Activated CD4-positive, alpha-beta memory T cell treated with anti-CD3 and anti-CD28 coated beads, Interleukin-2, amount 10 ng/mL, durations not matched to agents 7 days and 5 days (primary cell): ENCODE measurements at regions of chr14 and their contacts with region 1.

Region 1: DNA sequence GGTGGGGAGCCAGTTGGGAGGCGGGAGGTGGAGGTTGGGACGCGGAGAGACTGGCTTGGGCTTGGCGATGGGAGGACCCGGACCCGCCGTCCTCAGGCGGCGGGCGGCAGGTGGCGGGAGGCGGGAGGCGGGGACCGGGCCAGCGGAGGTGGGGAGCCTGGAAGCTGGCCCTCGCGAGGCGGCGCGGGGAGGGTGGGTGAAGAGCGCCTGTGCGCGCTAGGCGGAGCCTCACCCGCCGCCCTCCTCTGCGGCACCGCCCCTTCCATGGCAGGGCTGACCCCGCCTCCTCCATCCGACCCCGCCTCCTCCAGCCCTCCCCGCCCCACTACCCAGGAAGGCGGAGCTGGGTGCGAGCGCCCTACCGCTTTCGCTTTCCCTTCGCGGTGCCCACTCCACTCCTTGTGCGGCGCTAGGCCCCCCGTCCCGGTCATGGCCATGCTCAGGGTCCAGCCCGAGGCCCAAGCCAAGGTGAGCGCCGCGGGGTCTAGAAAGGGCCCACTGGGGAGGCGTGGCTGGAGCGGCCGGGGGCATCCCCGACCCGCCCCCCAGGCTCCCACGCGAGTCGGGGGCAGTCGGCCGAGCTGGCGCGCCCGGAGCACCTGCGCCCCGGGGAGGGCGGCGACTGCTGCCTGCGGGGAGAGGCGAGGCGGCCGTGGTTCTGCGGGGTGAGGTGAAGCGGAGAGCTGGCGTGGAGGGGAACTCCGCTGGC is at the start of gene PSME1:
- DNase-seq: peak; percentile 96
- H3K4me3 Mint-ChIP-seq: peak within 1 kb of the TSS; percentile 93
- H3K27ac Mint-ChIP-seq: peak within 1 kb of the TSS; percentile 89
- H3K4me1 Mint-ChIP-seq: peaks cover 53% of the 10 kb centered on the region
- H3K27me3 Mint-ChIP-seq: no peaks in the 10 kb centered on the region
- total RNA-seq, gene PSME1: 391 to 397 TPM

Region 2: DNA sequence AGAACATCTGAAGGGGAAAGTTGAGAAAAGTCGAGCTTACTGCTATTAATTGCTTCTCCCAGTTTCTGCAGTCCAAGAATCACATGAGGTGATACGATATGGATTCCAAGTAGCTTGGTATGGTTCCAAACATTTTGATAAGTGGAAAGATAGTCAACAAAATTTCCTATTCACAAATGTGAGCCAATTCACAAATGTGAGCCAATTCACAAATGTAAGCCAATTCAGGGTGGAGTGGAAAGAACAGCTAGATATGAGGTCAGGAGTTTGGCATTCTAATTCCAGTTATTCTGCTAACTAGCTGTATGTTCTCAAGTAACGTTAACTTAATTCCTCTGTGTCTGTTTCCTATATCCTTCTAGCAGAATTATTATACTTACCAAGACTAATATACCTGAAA is 220.0 kb before region 1 on chr14:
- CTCF ChIA-PET with region 1: no interaction called
- POLR2A ChIA-PET with region 1: no interaction called
- DNase-seq: no peak
- H3K4me3 Mint-ChIP-seq: no peak overlapping the region
- H3K27ac Mint-ChIP-seq: no peak overlapping the region
- H3K4me1 Mint-ChIP-seq: no peaks in the 10 kb centered on the region
- H3K27me3 Mint-ChIP-seq: peaks cover 12% of the 10 kb centered on the region

Region 3: DNA sequence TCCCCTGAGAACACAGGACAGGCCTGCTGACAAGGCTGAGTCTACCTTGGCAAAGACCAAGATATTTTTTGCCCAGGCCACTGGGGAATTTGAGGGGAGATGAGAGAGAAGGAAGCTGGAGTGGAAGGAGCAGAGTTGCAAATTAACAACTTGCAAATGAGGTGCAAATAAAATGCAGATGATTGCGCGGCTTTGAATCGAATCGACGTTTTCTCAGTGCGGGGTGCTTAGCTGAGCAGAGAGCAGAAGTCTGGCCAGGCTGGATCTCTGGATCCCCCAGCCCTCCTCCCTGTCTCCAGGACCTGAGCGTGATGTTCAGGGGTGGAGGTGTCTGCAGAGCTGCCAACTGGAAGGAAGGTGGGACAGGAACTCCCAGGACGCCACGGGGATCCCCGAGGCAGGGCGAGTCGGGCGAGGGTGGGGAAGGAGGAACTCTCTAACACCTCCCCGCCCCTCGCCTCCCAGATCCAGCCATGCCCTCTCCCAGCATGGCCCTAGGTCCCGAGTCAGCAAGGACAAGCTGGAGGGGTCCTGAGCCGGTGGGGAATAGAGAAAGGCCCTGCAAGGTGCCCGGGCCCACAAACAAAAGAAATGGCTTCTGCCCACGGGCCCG is 84.7 kb before region 1 on chr14:
- CTCF ChIA-PET with region 1: no interaction called
- POLR2A ChIA-PET with region 1: no interaction called
- DNase-seq: peak; percentile 22
- H3K4me3 Mint-ChIP-seq: peak overlapping the region; percentile 69
- H3K27ac Mint-ChIP-seq: no peak overlapping the region
- H3K4me1 Mint-ChIP-seq: peaks cover 23% of the 10 kb centered on the region
- H3K27me3 Mint-ChIP-seq: peaks cover 30% of the 10 kb centered on the region

Region 4: GRCh38 chr14:24188251-24189058 is 52.5 kb after region 1 on chr14 and contains the start of gene IPO4:
- CTCF ChIA-PET with region 1: interaction called, 3 read pairs
- POLR2A ChIA-PET with region 1: interaction called, 13 read pairs
- DNase-seq: peak; percentile 96
- H3K4me3 Mint-ChIP-seq: peak within 1 kb of the TSS; percentile 81
- H3K27ac Mint-ChIP-seq: peak within 1 kb of the TSS; percentile 79
- H3K4me1 Mint-ChIP-seq: peaks cover 59% of the 10 kb centered on the region
- H3K27me3 Mint-ChIP-seq: no peaks in the 10 kb centered on the region
- total RNA-seq, gene IPO4: 24.0 to 26.2 TPM